ENCODE measurements at regions of chr14 and their contacts with region 1.

Region 1: GRCh38 chr14:76962303-76962660 is 66.2 kb downstream of the IRF2BPL start:
- DNase-seq: no peak
- ATAC-seq: no peak
- H3K4me3 Mint-ChIP-seq: peak overlapping the region; percentile 79
- H3K27ac Mint-ChIP-seq: peak overlapping the region; percentile 98
- H3K4me1 Mint-ChIP-seq: peaks cover 89% of the 10 kb centered on the region
- H3K27me3 Mint-ChIP-seq: no peaks in the 10 kb centered on the region

Region 2: DNA sequence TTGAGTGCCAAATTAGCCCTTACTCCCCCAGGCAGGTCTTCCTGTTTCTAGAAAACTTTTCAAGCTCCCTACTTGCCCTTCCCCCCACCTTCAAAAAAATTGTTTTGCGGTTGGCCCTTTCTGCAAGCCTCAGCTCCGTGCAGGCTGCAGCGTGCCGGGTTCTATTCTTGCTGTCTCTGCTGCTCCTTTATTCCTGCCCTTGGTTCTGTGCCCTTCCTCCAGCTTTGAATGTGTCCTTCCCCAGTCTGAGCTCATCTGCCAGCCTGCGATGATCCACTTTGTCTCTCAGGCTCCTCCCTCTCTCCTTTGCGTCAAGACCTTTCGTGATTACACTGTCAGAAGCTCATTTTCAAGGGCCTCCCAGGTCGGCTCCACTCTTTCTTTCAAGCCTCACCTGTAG is 32.4 kb before region 1 on chr14:
- CTCF ChIA-PET with region 1: interaction called, 12 read pairs
- POLR2A ChIA-PET with region 1: interaction called, 9 read pairs
- DNase-seq: peak; percentile 82
- ATAC-seq: peak; percentile 70
- H3K4me3 Mint-ChIP-seq: peak overlapping the region; percentile 48
- H3K27ac Mint-ChIP-seq: peak overlapping the region; percentile 82
- H3K4me1 Mint-ChIP-seq: peaks cover 79% of the 10 kb centered on the region
- H3K27me3 Mint-ChIP-seq: no peaks in the 10 kb centered on the region

Region 3: GRCh38 chr14:77023001-77023996 is 61.0 kb after region 1 on chr14:
- CTCF ChIA-PET with region 1: interaction called, 30 read pairs
- POLR2A ChIA-PET with region 1: interaction called, 63 read pairs
- DNase-seq: no peak
- ATAC-seq: no peak
- H3K4me3 Mint-ChIP-seq: peak overlapping the region; percentile 10
- H3K27ac Mint-ChIP-seq: peak overlapping the region; percentile 74
- H3K4me1 Mint-ChIP-seq: peaks cover 44% of the 10 kb centered on the region
- H3K27me3 Mint-ChIP-seq: no peaks in the 10 kb centered on the region

Region 4: GRCh38 chr14:77040059-77040740 is 77.9 kb after region 1 on chr14:
- CTCF ChIA-PET with region 1: interaction called, 16 read pairs
- POLR2A ChIA-PET with region 1: interaction called, 24 read pairs
- DNase-seq: peak; percentile 94
- ATAC-seq: peak; percentile 72
- H3K4me3 Mint-ChIP-seq: peak overlapping the region; percentile 76
- H3K27ac Mint-ChIP-seq: peak overlapping the region; percentile 97
- H3K4me1 Mint-ChIP-seq: peaks cover 89% of the 10 kb centered on the region
- H3K27me3 Mint-ChIP-seq: no peaks in the 10 kb centered on the region

Measured in activated CD8-positive, alpha-beta T cell treated with anti-CD3 and anti-CD28 coated beads, Interleukin-2, amount 10 ng/mL, durations not matched to agents 7 days and 5 days (primary cell).